ENCODE measurements at regions of chr22 and their contacts with region 1.

Region 1: DNA sequence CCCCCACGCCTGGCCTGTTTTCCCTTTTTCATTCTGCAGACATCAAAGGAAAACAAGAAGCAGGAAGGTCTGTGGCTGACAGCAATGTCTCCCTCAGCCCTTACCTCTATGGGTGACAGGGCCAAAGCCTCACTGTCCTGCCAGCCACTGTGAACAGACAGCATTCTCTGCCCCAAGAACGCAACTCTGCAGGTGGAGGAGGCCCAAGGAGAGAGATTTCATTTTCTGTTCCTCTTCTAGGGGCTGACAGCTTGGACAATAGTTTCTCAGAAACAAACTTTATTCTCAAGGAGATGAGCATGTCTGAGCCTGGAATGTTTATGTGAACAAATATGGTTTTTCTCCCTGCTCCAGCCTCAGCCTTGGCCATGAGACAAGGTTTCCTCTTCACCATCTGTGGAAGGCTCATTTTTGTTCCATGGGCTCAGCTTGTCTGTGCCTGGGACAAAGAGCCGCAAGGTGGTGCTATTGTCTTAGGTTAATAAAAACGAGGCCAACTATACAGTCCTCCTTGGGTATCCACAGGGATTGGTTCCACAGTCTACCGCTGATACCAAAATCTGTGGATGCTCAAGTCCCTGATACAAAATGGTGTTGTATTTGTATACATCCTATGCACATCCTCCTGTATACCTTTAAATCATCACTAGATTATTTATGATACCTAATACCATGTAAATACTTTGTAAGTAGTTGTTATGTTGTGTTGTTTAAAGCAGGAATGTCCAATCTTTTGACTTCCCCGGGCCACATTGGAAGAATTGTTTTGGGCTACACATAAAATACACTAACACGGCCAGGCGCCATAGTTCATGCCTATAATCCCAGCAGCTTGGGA is 5.8 kb downstream of the PIWIL3 start:
- DNase-seq: peak; percentile 49
- ATAC-seq: peak; percentile 33
- H3K4me3 ChIP-seq: no peak overlapping the region
- H3K4me3 Mint-ChIP-seq: no peak overlapping the region
- H3K27ac ChIP-seq: no peak overlapping the region
- H3K27ac Mint-ChIP-seq: no peak overlapping the region
- H3K4me1 ChIP-seq: no peaks in the 10 kb centered on the region
- H3K4me1 Mint-ChIP-seq: no peaks in the 10 kb centered on the region
- H3K27me3 ChIP-seq: peaks cover 0 to 8% (median 2%) of the 10 kb centered on the region in 4 experiments
- H3K27me3 Mint-ChIP-seq: peaks cover 19% of the 10 kb centered on the region
- CTCF ChIP-seq: peak; percentile 65

Region 2: GRCh38 chr22:24758164-24758799 is 10.5 kb before region 1 on chr22:
- CTCF ChIA-PET with region 1: interaction called, 17 read pairs
- POLR2A ChIA-PET with region 1: no interaction called
- intact Hi-C with region 1: no loop called
- DNase-seq: peak; percentile 66
- ATAC-seq: no peak
- H3K4me3 ChIP-seq: no peak overlapping the region
- H3K4me3 Mint-ChIP-seq: no peak overlapping the region
- H3K27ac ChIP-seq: no peak overlapping the region
- H3K27ac Mint-ChIP-seq: no peak overlapping the region
- H3K4me1 ChIP-seq: peaks cover 0 to 4% of the 10 kb centered on the region in 2 donors
- H3K4me1 Mint-ChIP-seq: peaks cover 3% of the 10 kb centered on the region
- H3K27me3 ChIP-seq: peaks cover 0 to 4% (median 2%) of the 10 kb centered on the region in 4 experiments
- H3K27me3 Mint-ChIP-seq: peaks cover 20% of the 10 kb centered on the region
- CTCF ChIP-seq: peak; percentile 97

Region 3: GRCh38 chr22:24834845-24835570 is 66.3 kb after region 1 on chr22:
- CTCF ChIA-PET with region 1: interaction called, 8 read pairs
- POLR2A ChIA-PET with region 1: interaction called, 5 read pairs
- intact Hi-C with region 1: loop called (anchors 5 kb)
- DNase-seq: no peak
- ATAC-seq: no peak
- H3K4me3 ChIP-seq: no peak overlapping the region
- H3K4me3 Mint-ChIP-seq: no peak overlapping the region
- H3K27ac ChIP-seq: no peak overlapping the region
- H3K27ac Mint-ChIP-seq: no peak overlapping the region
- H3K4me1 ChIP-seq: peaks cover 13 to 24% of the 10 kb centered on the region in 2 donors
- H3K4me1 Mint-ChIP-seq: peaks cover 12% of the 10 kb centered on the region
- H3K27me3 ChIP-seq: peaks cover 0 to 8% (median 0%) of the 10 kb centered on the region in 4 experiments
- H3K27me3 Mint-ChIP-seq: peaks cover 11% of the 10 kb centered on the region
- CTCF ChIP-seq: no peak

Region 4: GRCh38 chr22:24845041-24845898 is 76.5 kb after region 1 on chr22:
- CTCF ChIA-PET with region 1: interaction called, 81 read pairs
- POLR2A ChIA-PET with region 1: no interaction called
- intact Hi-C with region 1: no loop called
- DNase-seq: no peak
- ATAC-seq: no peak
- H3K4me3 ChIP-seq: no peak overlapping the region
- H3K4me3 Mint-ChIP-seq: no peak overlapping the region
- H3K27ac ChIP-seq: no peak overlapping the region
- H3K27ac Mint-ChIP-seq: no peak overlapping the region
- H3K4me1 ChIP-seq: no peaks in the 10 kb centered on the region
- H3K4me1 Mint-ChIP-seq: peaks cover under 1% of the 10 kb centered on the region
- H3K27me3 ChIP-seq: no peaks in the 10 kb centered on the region
- H3K27me3 Mint-ChIP-seq: peaks cover 28% of the 10 kb centered on the region
- CTCF ChIP-seq: no peak

Region 5: DNA sequence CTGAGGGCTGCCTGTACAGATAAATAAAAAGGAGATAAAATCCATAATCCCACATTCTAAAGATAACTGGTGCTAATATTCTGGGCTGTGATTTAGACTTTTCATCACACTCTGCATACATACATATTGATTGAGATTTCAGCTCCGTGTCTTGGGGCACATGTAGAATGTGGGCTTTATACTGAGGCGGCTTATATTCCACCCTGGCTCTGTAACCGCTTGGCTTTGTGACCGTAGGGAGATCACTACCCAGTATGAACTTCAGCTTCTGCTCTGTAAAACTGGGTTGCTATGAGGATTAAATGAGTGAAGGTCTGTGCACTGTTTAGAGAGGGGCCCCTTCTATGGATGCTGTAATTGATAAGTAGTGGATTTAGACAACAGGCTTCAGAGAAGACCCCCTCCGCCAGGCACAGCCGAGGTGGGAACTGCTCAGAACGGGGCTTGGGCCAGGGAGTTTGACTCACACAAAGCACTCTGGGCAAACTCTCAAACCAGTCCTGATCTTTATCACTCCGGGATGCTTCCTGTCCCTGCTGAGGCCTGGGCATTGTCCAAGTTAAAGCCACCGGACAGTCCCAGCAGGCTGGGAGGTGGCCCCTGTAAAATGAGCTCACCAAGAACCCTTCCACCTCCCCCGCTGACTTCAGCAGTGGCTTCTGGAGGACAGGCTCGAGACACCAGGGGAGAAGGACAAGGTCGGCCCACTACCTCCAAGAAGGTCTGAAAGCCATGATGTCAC is 201.0 kb after region 1 on chr22:
- CTCF ChIA-PET with region 1: no interaction called
- POLR2A ChIA-PET with region 1: no interaction called
- intact Hi-C with region 1: no loop called
- DNase-seq: no peak
- ATAC-seq: no peak
- H3K4me3 ChIP-seq: no peak overlapping the region
- H3K4me3 Mint-ChIP-seq: no peak overlapping the region
- H3K27ac ChIP-seq: no peak overlapping the region
- H3K27ac Mint-ChIP-seq: no peak overlapping the region
- H3K4me1 ChIP-seq: no peaks in the 10 kb centered on the region
- H3K4me1 Mint-ChIP-seq: no peaks in the 10 kb centered on the region
- H3K27me3 ChIP-seq: no peaks in the 10 kb centered on the region
- H3K27me3 Mint-ChIP-seq: no peaks in the 10 kb centered on the region
- CTCF ChIP-seq: no peak

Region 6: GRCh38 chr22:25048659-25049647 is 280.2 kb after region 1 on chr22:
- CTCF ChIA-PET with region 1: interaction called, 12 read pairs
- POLR2A ChIA-PET with region 1: no interaction called
- intact Hi-C with region 1: no loop called
- DNase-seq: peak; percentile 56
- ATAC-seq: no peak
- H3K4me3 ChIP-seq: no peak overlapping the region
- H3K4me3 Mint-ChIP-seq: no peak overlapping the region
- H3K27ac ChIP-seq: no peak overlapping the region
- H3K27ac Mint-ChIP-seq: no peak overlapping the region
- H3K4me1 ChIP-seq: no peaks in the 10 kb centered on the region
- H3K4me1 Mint-ChIP-seq: no peaks in the 10 kb centered on the region
- H3K27me3 ChIP-seq: no peaks in the 10 kb centered on the region
- H3K27me3 Mint-ChIP-seq: peaks cover 4% of the 10 kb centered on the region
- CTCF ChIP-seq: peak; percentile 75